ENCODE measurements at regions of chr10 and their contacts with region 1.

Region 1: DNA sequence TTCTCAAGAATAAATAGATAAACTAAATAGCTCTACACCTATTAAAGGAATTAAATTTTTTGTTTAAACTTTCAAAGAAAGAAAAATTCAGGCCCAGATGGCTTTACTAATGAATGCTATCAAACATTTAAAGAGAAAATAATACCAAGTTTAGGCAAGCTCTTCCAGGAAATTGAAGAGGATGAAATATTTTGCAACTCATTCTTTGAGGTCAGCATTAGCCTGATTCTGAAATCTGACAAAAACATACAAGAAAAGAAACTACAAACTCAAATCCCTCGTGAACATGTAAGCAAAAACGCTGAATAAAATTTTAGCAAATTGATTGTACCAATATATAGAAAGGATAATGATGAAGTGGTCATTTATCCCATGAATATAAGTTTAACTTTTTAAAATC is 93.4 kb downstream of the RTKN2 start:
- DNase-seq: no peak
- ATAC-seq: no peak
- H3K4me3 ChIP-seq: no peak overlapping the region
- H3K27ac ChIP-seq: no peak overlapping the region
- H3K4me1 ChIP-seq: no peaks in the 10 kb centered on the region; the same call in 1 of the 2 replicates
- H3K27me3 ChIP-seq: no peaks in the 10 kb centered on the region
- CTCF ChIP-seq: no peak
- POLR2A ChIP-seq: no peak
- RAD21 ChIP-seq: no peak

Region 2: DNA sequence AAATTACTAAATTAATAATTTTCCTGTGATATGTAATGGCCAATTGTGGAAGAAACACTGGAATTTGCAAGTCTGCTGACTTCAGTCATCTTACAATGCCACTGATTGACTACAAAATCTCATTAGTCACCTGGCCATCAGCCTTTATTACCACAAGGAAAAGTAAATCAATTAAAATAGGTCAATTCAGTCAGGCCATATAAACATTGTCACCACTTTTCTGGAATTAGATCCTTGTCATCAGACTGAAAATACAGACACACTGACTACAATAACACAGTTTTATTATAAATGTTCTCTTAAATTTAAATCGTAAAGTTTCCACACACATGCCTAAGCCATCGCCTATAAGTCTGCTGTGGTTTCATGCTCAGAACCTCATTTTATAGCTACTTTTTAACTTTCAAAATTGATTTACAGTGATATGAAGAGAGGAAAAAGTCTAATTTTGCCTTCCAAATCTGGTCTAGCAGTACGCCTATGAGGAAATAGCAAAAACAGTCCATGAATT is 39.2 kb after region 1 on chr10:
- CTCF ChIA-PET with region 1: no interaction called
- POLR2A ChIA-PET with region 1: no interaction called
- dilution Hi-C with region 1: no loop called
- in situ Hi-C with region 1: no loop called
- intact Hi-C with region 1: loop called (anchors 5 kb)
- DNase-seq: no peak
- ATAC-seq: no peak
- H3K4me3 ChIP-seq: no peak overlapping the region
- H3K27ac ChIP-seq: no peak overlapping the region
- H3K4me1 ChIP-seq: no peaks in the 10 kb centered on the region
- H3K27me3 ChIP-seq: no peaks in the 10 kb centered on the region
- CTCF ChIP-seq: no peak
- POLR2A ChIP-seq: no peak
- RAD21 ChIP-seq: no peak